MCF 10A (cell line): ENCODE measurements at regions of chr16 and their contacts with region 1.

Region 1: DNA sequence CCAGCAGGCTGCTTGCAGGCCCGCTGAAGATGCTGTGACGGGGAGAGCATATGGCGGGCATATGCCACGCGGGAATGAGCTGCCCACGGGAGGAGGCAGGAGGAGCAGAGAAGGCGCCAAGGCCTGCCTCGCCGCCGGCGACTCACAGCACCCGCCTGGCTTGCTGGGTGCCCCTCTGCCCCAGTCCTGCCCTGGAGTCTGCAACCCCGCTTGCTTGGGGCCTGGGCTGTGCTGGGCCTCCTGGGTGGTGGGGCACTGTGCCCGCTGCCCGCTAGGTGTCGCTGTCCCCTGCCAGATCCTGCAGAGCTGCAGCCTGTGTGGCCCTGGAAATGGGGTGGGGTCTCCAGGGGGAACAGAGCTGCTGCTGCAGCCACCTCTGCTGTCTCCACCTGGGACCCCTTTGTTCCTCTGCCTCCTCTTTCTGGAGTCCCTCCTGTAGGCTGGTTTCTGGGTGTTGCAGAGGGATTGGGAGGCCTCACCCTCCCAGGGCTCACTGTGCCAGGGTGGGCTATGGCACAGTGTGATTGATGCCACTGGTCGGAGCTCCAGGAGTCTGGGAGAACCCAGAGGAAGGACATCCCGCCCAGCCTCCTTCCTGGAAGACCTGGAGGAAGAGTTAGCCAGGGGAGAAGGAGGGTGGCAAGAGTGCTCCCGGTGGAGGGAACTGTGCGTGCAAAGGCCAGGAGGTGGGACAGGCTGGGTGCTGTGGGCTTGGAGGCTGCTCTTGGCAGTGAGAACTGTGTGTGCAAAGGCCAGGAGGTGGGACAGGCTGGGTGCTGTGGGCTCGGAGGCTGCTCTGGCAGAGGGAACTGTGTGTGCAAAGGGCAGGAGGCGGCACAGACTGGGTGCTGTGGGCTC is 141.0 kb upstream of the CIBAR2 start:
- DNase-seq: peak; percentile 47
- H3K4me3 Mint-ChIP-seq: no peak overlapping the region
- H3K27ac Mint-ChIP-seq: no peak overlapping the region
- H3K4me1 Mint-ChIP-seq: no peaks in the 10 kb centered on the region
- H3K27me3 Mint-ChIP-seq: peaks cover 5% of the 10 kb centered on the region
- CTCF ChIP-seq: peak; percentile 95

Region 2: GRCh38 chr16:84976644-84977400 is 276.5 kb before region 1 on chr16:
- CTCF ChIA-PET with region 1: no interaction called
- POLR2A ChIA-PET with region 1: no interaction called
- intact Hi-C with region 1: no loop called
- DNase-seq: no peak
- H3K4me3 Mint-ChIP-seq: no peak overlapping the region
- H3K27ac Mint-ChIP-seq: no peak overlapping the region
- H3K4me1 Mint-ChIP-seq: peaks cover 4% of the 10 kb centered on the region
- H3K27me3 Mint-ChIP-seq: no peaks in the 10 kb centered on the region
- CTCF ChIP-seq: no peak

Region 3: GRCh38 chr16:85238233-85238647 is 15.1 kb before region 1 on chr16:
- CTCF ChIA-PET with region 1: interaction called, 12 read pairs
- POLR2A ChIA-PET with region 1: no interaction called
- intact Hi-C with region 1: no loop called
- DNase-seq: no peak
- H3K4me3 Mint-ChIP-seq: no peak overlapping the region
- H3K27ac Mint-ChIP-seq: no peak overlapping the region
- H3K4me1 Mint-ChIP-seq: no peaks in the 10 kb centered on the region
- H3K27me3 Mint-ChIP-seq: no peaks in the 10 kb centered on the region
- CTCF ChIP-seq: no peak

Region 4: GRCh38 chr16:85266857-85267256 is 13.5 kb after region 1 on chr16:
- CTCF ChIA-PET with region 1: interaction called, 38 read pairs
- POLR2A ChIA-PET with region 1: no interaction called
- intact Hi-C with region 1: no loop called
- DNase-seq: no peak
- H3K4me3 Mint-ChIP-seq: no peak overlapping the region
- H3K27ac Mint-ChIP-seq: no peak overlapping the region
- H3K4me1 Mint-ChIP-seq: no peaks in the 10 kb centered on the region
- H3K27me3 Mint-ChIP-seq: no peaks in the 10 kb centered on the region
- CTCF ChIP-seq: no peak

Region 5: DNA sequence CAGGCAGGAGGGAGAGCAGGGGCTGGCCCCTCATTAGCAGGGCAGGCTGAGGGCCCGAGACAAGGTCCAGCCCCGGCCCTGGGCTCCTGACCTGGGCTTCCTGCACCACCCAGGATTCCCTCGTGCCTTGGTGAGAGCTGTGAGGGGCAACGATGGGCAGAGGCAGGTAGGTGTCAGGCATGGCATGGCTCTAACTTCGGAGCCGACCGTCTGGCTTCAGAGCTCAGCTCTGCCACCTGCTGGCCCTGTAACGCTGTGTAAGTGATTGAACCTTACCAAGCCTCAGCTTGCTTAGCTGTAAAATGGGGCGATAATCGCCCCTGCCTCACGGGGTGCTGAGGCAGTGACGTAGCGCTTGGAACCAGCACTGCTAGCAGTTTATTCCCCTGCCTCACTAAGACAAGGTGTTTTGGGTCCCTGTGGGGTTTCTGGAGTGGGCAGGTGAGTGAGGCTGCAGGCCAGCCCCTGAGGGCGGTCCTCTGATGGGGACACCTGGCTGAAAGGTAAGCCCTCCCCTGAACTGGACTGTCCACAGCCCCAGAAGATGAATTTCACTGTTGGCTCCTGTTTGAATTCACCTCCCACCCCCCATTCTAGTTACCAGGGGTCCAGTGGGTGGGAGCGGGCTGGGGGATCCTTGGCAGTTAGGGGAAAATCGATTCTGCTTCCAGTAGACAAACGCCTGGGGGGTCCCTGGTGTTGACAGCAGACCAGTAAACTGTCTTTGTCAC is 175.0 kb after region 1 on chr16:
- CTCF ChIA-PET with region 1: no interaction called
- POLR2A ChIA-PET with region 1: no interaction called
- intact Hi-C with region 1: no loop called
- DNase-seq: peak; percentile 49
- H3K4me3 Mint-ChIP-seq: no peak overlapping the region
- H3K27ac Mint-ChIP-seq: no peak overlapping the region
- H3K4me1 Mint-ChIP-seq: no peaks in the 10 kb centered on the region
- H3K27me3 Mint-ChIP-seq: no peaks in the 10 kb centered on the region
- CTCF ChIP-seq: peak; percentile 59